Left cardiac atrium (tissue), 4 donors: ENCODE measurements at regions of chr17 and their contacts with region 1.

Region 1: GRCh38 chr17:3012926-3013581 is 50.4 kb downstream of the OR1D5 start:
- DNase-seq: peak; percentile 66
- ATAC-seq: peak; percentile 89 to 91

Region 2: DNA sequence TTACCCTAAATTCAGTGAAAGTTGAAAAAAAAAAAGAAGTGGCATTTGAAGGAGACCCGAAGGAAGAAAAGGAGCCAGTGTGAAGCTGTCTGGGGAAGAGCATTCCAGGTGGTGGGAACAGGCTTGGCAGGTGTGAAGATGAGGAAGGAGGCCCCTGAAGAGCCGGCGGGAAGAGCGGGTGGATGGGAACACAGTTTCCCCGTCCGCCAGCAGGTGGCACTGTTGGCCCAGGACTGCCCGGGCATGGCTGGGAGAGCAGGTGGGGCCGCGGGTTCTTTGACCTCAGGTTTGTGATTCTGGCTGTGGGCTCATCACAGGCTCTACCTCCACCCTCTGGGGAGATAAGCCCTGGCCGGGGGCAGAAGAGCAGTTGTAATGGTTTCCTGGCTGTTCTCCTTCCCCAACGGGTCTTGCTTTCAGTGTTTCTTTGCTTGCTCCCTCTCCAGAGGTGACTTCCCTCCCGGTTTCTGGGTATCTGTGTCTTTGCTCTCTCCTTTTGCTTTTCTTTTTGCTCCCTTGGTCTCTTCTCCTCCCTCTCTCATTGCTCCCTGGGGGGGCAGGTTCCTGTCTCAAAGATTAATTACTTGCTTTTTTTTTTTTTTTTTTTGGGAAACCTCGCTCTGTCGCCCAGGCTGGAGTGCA is 184.5 kb before region 1 on chr17:
- intact Hi-C with region 1: loop called (anchors 1 to 5 kb)
- DNase-seq: peak; percentile 77
- ATAC-seq: peak; percentile 80 to 90

Region 3: GRCh38 chr17:2847381-2848333 is 165.4 kb before region 1 on chr17:
- intact Hi-C with region 1: loop called (anchors 5 kb)
- DNase-seq: no peak
- ATAC-seq: peak in 1 of 2 donors; percentile 18